ENCODE measurements at regions of chr15 and their contacts with region 1.

Region 1: GRCh38 chr15:75201609-75202250 is at the start of gene C15orf39:
- DNase-seq: peak; percentile 77
- H3K4me3 Mint-ChIP-seq: peak within 1 kb of the TSS; percentile 92
- H3K27ac Mint-ChIP-seq: peak within 1 kb of the TSS; percentile 93
- H3K4me1 Mint-ChIP-seq: peaks cover 67% of the 10 kb centered on the region
- H3K27me3 Mint-ChIP-seq: no peaks in the 10 kb centered on the region
- total RNA-seq, gene C15orf39: 47.0 to 48.6 TPM

Region 2: GRCh38 chr15:75029378-75030022 is 172.2 kb before region 1 on chr15:
- CTCF ChIA-PET with region 1: interaction called, 34 read pairs
- POLR2A ChIA-PET with region 1: interaction called, 3 read pairs
- DNase-seq: peak; percentile 92
- H3K4me3 Mint-ChIP-seq: no peak overlapping the region
- H3K27ac Mint-ChIP-seq: no peak overlapping the region
- H3K4me1 Mint-ChIP-seq: peaks cover 54% of the 10 kb centered on the region
- H3K27me3 Mint-ChIP-seq: no peaks in the 10 kb centered on the region

Region 3: GRCh38 chr15:75042730-75043508 is 158.8 kb before region 1 on chr15:
- CTCF ChIA-PET with region 1: interaction called, 32 read pairs
- POLR2A ChIA-PET with region 1: interaction called, 7 read pairs
- DNase-seq: peak; percentile 76
- H3K4me3 Mint-ChIP-seq: peak overlapping the region; percentile 18
- H3K27ac Mint-ChIP-seq: peak overlapping the region; percentile 87
- H3K4me1 Mint-ChIP-seq: peaks cover 75% of the 10 kb centered on the region
- H3K27me3 Mint-ChIP-seq: no peaks in the 10 kb centered on the region

Region 4: GRCh38 chr15:75069301-75069925 is 132.3 kb before region 1 on chr15:
- CTCF ChIA-PET with region 1: interaction called, 17 read pairs
- POLR2A ChIA-PET with region 1: no interaction called
- DNase-seq: no peak
- H3K4me3 Mint-ChIP-seq: no peak overlapping the region
- H3K27ac Mint-ChIP-seq: peak overlapping the region; percentile 37
- H3K4me1 Mint-ChIP-seq: peaks cover 58% of the 10 kb centered on the region
- H3K27me3 Mint-ChIP-seq: no peaks in the 10 kb centered on the region

Region 5: GRCh38 chr15:75446151-75446550 is 244.4 kb after region 1 on chr15:
- CTCF ChIA-PET with region 1: no interaction called
- POLR2A ChIA-PET with region 1: no interaction called
- DNase-seq: no peak
- H3K4me3 Mint-ChIP-seq: peak overlapping the region; percentile 38
- H3K27ac Mint-ChIP-seq: peak overlapping the region; percentile 85
- H3K4me1 Mint-ChIP-seq: peaks cover 53% of the 10 kb centered on the region
- H3K27me3 Mint-ChIP-seq: no peaks in the 10 kb centered on the region

Measured in activated CD4-positive, alpha-beta T cell treated with anti-CD3 and anti-CD28 coated beads, Interleukin-2, amount 10 ng/mL, durations not matched to agents 7 days and 5 days (primary cell).